Naive thymus-derived CD4-positive, alpha-beta T cell (primary cell): ENCODE measurements at regions of chr12 and their contacts with region 1.

Region 1: GRCh38 chr12:104958009-104958945 is at the start of gene SLC41A2:
- DNase-seq: peak; percentile 55 to 87 (median 74)
- ATAC-seq: peak; percentile 93
- H3K4me3 ChIP-seq: peak within 1 kb of the TSS; percentile 77
- H3K4me3 Mint-ChIP-seq: peak within 1 kb of the TSS; percentile 91 to 98 (median 96)
- H3K27ac ChIP-seq: peak within 1 kb of the TSS; percentile 59
- H3K27ac Mint-ChIP-seq: peak within 1 kb of the TSS; percentile 65 to 93 (median 89)
- H3K4me1 ChIP-seq: peaks cover 6 to 9% of the 10 kb centered on the region in 2 donors
- H3K4me1 Mint-ChIP-seq: peaks cover 8 to 29% (median 26%) of the 10 kb centered on the region in 7 donors
- H3K27me3 ChIP-seq: peaks cover 0 to 3% of the 10 kb centered on the region in 2 donors
- H3K27me3 Mint-ChIP-seq: peaks cover 5 to 49% (median 7%) of the 10 kb centered on the region in 5 donors
- total RNA-seq, gene SLC41A2: 2.0 to 12.7 (median 2.6) TPM

Region 2: GRCh38 chr12:104303538-104304151 is 654.6 kb before region 1 on chr12 and contains the start of gene EID3:
- CTCF ChIA-PET with region 1: no interaction called
- POLR2A ChIA-PET with region 1: no interaction called
- intact Hi-C with region 1: loop called in 1 of 2 experiments (anchors 1 kb)
- DNase-seq: peak; percentile 86 to 96 (median 91)
- ATAC-seq: peak; percentile 99
- H3K4me3 ChIP-seq: peak within 1 kb of the TSS; percentile 56
- H3K4me3 Mint-ChIP-seq: peak within 1 kb of the TSS; percentile 87 to 99 (median 96)
- H3K27ac ChIP-seq: peak within 1 kb of the TSS; percentile 84
- H3K27ac Mint-ChIP-seq: peak within 1 kb of the TSS; percentile 91 to 99 (median 97)
- H3K4me1 ChIP-seq: peaks cover 7 to 24% of the 10 kb centered on the region in 2 donors
- H3K4me1 Mint-ChIP-seq: peaks cover 35 to 72% (median 56%) of the 10 kb centered on the region in 7 donors
- H3K27me3 ChIP-seq: no peaks in the 10 kb centered on the region
- H3K27me3 Mint-ChIP-seq: no peaks in the 10 kb centered on the region
- total RNA-seq, gene EID3: 8.2 to 11.8 (median 10.4) TPM

Region 3: GRCh38 chr12:104680066-104680465 is 278.2 kb before region 1 on chr12:
- CTCF ChIA-PET with region 1: no interaction called
- POLR2A ChIA-PET with region 1: no interaction called
- intact Hi-C with region 1: loop called in 1 of 2 experiments (anchors 5 kb)
- DNase-seq: peak in 7 of 9 donors; percentile 15 to 51 (median 30)
- ATAC-seq: peak; percentile 44
- H3K4me3 ChIP-seq: no peak overlapping the region
- H3K4me3 Mint-ChIP-seq: peak overlapping the region in 3 of 10 donors; percentile 16 to 36 (median 26)
- H3K27ac ChIP-seq: no peak overlapping the region
- H3K27ac Mint-ChIP-seq: peak overlapping the region in 3 of 9 donors; percentile 15 to 80 (median 26)
- H3K4me1 ChIP-seq: peaks cover 25 to 46% of the 10 kb centered on the region in 2 donors
- H3K4me1 Mint-ChIP-seq: peaks cover 36 to 80% (median 46%) of the 10 kb centered on the region in 7 donors
- H3K27me3 ChIP-seq: no peaks in the 10 kb centered on the region
- H3K27me3 Mint-ChIP-seq: no peaks in the 10 kb centered on the region

Region 4: DNA sequence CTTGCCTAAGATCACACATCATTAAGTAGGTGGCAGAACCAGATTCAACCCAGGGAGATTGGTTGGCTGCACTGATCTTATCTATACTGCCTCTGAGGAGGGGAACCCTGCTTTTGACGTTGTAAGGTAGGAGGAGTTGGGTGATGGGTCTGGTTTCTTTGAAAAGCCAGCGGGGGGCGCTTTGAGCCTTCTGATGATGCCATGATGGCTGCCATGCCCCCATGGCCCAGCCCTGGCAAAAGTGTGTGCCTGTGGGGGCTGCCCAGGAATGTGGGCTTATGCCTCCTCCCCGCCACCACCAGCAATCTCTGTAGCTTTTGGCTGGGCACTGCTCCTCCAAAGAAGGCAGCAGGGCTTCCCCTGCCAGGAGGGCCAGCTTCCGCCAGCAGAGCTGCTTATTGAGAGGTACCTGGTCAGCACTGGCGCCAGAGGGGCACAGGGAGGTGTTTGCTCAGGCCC is 224.5 kb before region 1 on chr12:
- CTCF ChIA-PET with region 1: no interaction called
- POLR2A ChIA-PET with region 1: no interaction called
- intact Hi-C with region 1: loop called in 1 of 2 experiments (anchors 5 kb)
- DNase-seq: no peak
- ATAC-seq: peak; percentile 58
- H3K4me3 ChIP-seq: no peak overlapping the region
- H3K4me3 Mint-ChIP-seq: no peak overlapping the region
- H3K27ac ChIP-seq: no peak overlapping the region
- H3K27ac Mint-ChIP-seq: peak overlapping the region in 2 of 9 donors; percentile 16 to 65
- H3K4me1 ChIP-seq: peaks cover 19 to 38% of the 10 kb centered on the region in 2 donors
- H3K4me1 Mint-ChIP-seq: peaks cover 45 to 71% (median 60%) of the 10 kb centered on the region in 7 donors
- H3K27me3 ChIP-seq: no peaks in the 10 kb centered on the region
- H3K27me3 Mint-ChIP-seq: no peaks in the 10 kb centered on the region

Region 5: GRCh38 chr12:105036937-105037649 is 78.8 kb after region 1 on chr12:
- CTCF ChIA-PET with region 1: no interaction called
- POLR2A ChIA-PET with region 1: no interaction called
- intact Hi-C with region 1: loop called in 1 of 2 experiments (anchors 5 kb)
- DNase-seq: peak in 4 of 9 donors; percentile 1 to 16 (median 6)
- ATAC-seq: no peak
- H3K4me3 ChIP-seq: no peak overlapping the region
- H3K4me3 Mint-ChIP-seq: peak overlapping the region in 8 of 10 donors; percentile 32 to 79 (median 44)
- H3K27ac ChIP-seq: peak overlapping the region; percentile 11
- H3K27ac Mint-ChIP-seq: peak overlapping the region in 8 of 9 donors; percentile 56 to 87 (median 80)
- H3K4me1 ChIP-seq: peaks cover 11 to 15% of the 10 kb centered on the region in 2 donors
- H3K4me1 Mint-ChIP-seq: peaks cover 4 to 29% (median 16%) of the 10 kb centered on the region in 7 donors
- H3K27me3 ChIP-seq: no peaks in the 10 kb centered on the region
- H3K27me3 Mint-ChIP-seq: no peaks in the 10 kb centered on the region

Region 6: DNA sequence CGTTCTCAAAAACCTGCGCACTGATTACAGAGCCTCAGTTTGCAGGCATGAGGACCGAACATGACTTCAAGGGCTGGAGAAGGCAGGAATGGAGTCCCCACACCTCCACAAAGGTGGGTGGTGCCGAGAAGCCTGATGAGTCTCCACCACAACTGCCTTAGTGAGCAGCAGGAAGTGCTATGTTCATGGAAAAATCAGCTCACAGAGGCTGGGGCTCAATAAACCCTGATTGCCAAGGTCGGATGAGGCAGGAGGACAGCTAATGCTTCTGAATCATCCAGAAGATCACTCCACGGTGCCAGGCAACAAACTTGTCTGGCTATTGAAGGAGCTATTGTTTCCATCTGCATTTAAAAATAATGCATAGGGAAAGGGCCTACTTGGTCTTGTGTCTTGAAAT is 246.6 kb after region 1 on chr12:
- CTCF ChIA-PET with region 1: no interaction called
- POLR2A ChIA-PET with region 1: no interaction called
- intact Hi-C with region 1: no loop called
- DNase-seq: peak in 1 of 9 donors; percentile 31
- ATAC-seq: no peak
- H3K4me3 ChIP-seq: no peak overlapping the region
- H3K4me3 Mint-ChIP-seq: no peak overlapping the region
- H3K27ac ChIP-seq: no peak overlapping the region
- H3K27ac Mint-ChIP-seq: peak overlapping the region in 1 of 9 donors; percentile 29
- H3K4me1 ChIP-seq: no peaks in the 10 kb centered on the region
- H3K4me1 Mint-ChIP-seq: peaks cover 0 to 12% (median 0%) of the 10 kb centered on the region in 7 donors
- H3K27me3 ChIP-seq: no peaks in the 10 kb centered on the region
- H3K27me3 Mint-ChIP-seq: no peaks in the 10 kb centered on the region

Region 7: GRCh38 chr12:105235732-105236476 is 277.6 kb after region 1 on chr12 and contains the start of gene APPL2:
- CTCF ChIA-PET with region 1: no interaction called
- POLR2A ChIA-PET with region 1: no interaction called
- intact Hi-C with region 1: loop called (anchors 5 kb)
- DNase-seq: peak; percentile 52 to 81 (median 71)
- ATAC-seq: peak; percentile 86
- H3K4me3 ChIP-seq: peak within 1 kb of the TSS; percentile 71
- H3K4me3 Mint-ChIP-seq: peak within 1 kb of the TSS in 9 of 10 donors; percentile 89 to 95 (median 93)
- H3K27ac ChIP-seq: peak within 1 kb of the TSS; percentile 78
- H3K27ac Mint-ChIP-seq: peak within 1 kb of the TSS; percentile 86 to 96 (median 91)
- H3K4me1 ChIP-seq: peaks cover 25 to 39% of the 10 kb centered on the region in 2 donors
- H3K4me1 Mint-ChIP-seq: peaks cover 42 to 54% (median 48%) of the 10 kb centered on the region in 7 donors
- H3K27me3 ChIP-seq: no peaks in the 10 kb centered on the region
- H3K27me3 Mint-ChIP-seq: peaks cover 0 to 3% (median 0%) of the 10 kb centered on the region in 5 donors
- total RNA-seq, gene APPL2: 31.6 to 74.5 (median 58.3) TPM